Aorta (tissue), 5 donors: ENCODE measurements at regions of chr11 and their contacts with region 1.

Region 1: GRCh38 chr11:110429731-110430266 is at the start of gene FDX1:
- DNase-seq: peak; percentile 89 to 93
- ATAC-seq: peak; percentile 90
- H3K4me3 ChIP-seq: peak within 1 kb of the TSS; percentile 81 to 88
- H3K27ac ChIP-seq: peak within 1 kb of the TSS; percentile 19 to 41
- H3K4me1 ChIP-seq: peaks cover 0 to 3% of the 10 kb centered on the region in 2 donors
- H3K27me3 ChIP-seq: no peaks in the 10 kb centered on the region
- total RNA-seq, gene FDX1: 8.0 to 8.9 TPM

Region 2: DNA sequence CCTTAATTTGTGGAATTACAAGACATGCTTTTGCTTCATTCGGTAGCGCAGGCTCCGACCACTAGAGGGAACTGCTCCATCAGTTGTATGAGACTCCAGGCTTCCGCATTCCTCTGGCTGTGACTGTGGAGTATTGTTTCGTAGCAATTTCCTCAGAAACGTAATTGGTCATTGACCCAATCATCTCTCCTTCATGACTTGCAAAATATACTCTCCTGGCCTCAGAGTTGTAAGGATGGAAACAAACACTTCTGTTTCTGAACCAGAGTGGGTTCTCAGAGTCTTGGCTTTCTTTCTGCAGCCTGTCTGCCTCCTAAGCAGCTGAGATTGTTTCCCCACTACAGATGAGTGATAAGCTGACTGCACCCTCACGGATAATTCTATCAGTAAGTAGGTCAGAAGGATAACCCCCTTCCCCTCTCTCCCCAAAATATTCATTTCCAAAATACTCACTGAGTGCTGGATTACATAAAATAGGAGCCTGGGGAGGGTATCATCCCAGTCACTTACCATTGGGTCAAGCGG is 483.4 kb before region 1 on chr11:
- intact Hi-C with region 1: loop called in 1 of 2 experiments (anchors 10 kb)
- DNase-seq: peak; percentile 90 to 92
- ATAC-seq: peak; percentile 97
- H3K4me3 ChIP-seq: peak overlapping the region; percentile 29 to 84
- H3K27ac ChIP-seq: peak overlapping the region; percentile 28 to 86
- H3K4me1 ChIP-seq: peaks cover 0 to 3% of the 10 kb centered on the region in 2 donors
- H3K27me3 ChIP-seq: no peaks in the 10 kb centered on the region

Region 3: GRCh38 chr11:110279881-110280280 is 149.9 kb before region 1 on chr11:
- intact Hi-C with region 1: no loop called
- DNase-seq: no peak
- ATAC-seq: no peak
- H3K4me3 ChIP-seq: no peak overlapping the region
- H3K27ac ChIP-seq: no peak overlapping the region
- H3K4me1 ChIP-seq: no peaks in the 10 kb centered on the region
- H3K27me3 ChIP-seq: no peaks in the 10 kb centered on the region

Region 4: GRCh38 chr11:110296226-110297075 is 133.3 kb before region 1 on chr11 and contains the start of gene RDX:
- intact Hi-C with region 1: loop called (anchors 2 to 10 kb)
- DNase-seq: peak; percentile 86 to 93
- ATAC-seq: peak; percentile 88
- H3K4me3 ChIP-seq: peak within 1 kb of the TSS; percentile 74 to 96
- H3K27ac ChIP-seq: peak within 1 kb of the TSS; percentile 87 to 94
- H3K4me1 ChIP-seq: no peaks in the 10 kb centered on the region
- H3K27me3 ChIP-seq: no peaks in the 10 kb centered on the region
- total RNA-seq, gene RDX: 110 to 144 TPM

Region 5: DNA sequence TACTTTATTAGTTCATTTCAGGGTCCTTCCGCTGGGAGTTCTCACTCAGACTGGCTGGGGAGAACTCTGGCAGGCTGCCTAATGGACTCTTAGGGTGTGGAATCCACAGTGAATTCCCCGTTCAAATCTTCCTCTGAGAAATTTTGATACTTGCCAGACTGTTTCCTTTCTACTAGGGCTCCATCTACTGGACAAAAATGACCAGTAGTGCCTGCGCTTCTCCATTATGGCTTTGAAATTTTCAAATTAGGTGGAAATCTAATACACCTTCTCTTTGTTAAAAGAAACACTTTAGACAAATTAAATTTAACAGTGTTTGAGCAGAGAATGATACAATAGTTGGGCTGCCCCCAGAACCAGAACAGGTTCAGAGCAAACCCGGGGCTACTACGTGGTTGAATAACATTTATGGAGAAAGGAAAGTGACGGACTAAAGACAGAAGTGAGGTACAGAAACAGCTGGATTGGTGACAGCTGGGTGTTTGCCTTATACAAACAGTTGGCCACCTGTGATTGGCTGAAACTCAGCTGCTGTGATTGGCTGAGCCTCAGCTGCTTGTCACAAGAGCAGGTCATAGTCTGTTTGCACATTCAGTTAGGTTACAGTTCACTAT is 53.0 kb before region 1 on chr11:
- intact Hi-C with region 1: loop called in 1 of 2 experiments (anchors 5 kb)
- DNase-seq: peak in 1 of 2 donors; percentile 75
- ATAC-seq: peak; percentile 82
- H3K4me3 ChIP-seq: no peak overlapping the region
- H3K27ac ChIP-seq: peak overlapping the region in 1 of 2 donors; percentile 26
- H3K4me1 ChIP-seq: no peaks in the 10 kb centered on the region
- H3K27me3 ChIP-seq: no peaks in the 10 kb centered on the region

Region 6: GRCh38 chr11:110392056-110392455 is 37.7 kb before region 1 on chr11:
- intact Hi-C with region 1: no loop called
- DNase-seq: no peak
- ATAC-seq: no peak
- H3K4me3 ChIP-seq: no peak overlapping the region
- H3K27ac ChIP-seq: no peak overlapping the region
- H3K4me1 ChIP-seq: no peaks in the 10 kb centered on the region
- H3K27me3 ChIP-seq: no peaks in the 10 kb centered on the region

Region 7: DNA sequence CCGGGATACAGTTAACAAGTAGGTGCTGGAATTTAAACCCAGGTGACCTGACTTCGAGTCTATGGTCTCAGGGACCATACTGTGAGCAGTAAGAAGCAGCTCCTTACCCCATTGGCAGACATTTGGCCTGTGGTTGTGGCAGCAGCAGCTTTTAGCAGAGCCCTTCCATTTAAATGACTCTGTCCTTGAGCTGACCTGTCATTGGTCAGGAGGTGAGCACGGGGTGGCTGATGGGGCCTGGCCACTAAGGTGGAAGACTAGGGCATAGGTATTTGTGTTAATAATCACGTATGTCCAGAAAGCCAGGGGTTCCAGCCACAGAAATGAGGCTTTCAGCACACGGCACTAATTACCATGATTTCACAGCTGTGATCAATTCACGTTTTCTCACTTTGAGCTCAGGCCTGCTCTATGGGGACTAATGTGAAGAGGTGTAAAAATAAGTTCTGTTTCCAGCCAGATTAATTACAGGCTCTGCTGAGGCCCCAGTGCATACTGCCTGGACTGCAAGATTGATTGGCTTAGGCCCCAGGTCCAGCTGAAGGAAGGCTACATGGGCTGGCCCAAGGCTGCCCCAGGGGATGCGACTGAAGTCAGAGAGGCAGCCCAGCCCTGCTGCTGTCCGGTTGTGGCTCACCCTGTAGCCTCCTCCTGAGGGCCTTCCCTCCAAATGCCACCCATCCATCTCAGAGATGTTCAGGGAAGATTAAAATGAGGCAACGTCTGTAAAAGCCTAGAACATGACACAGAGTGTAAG is 75.9 kb after region 1 on chr11:
- intact Hi-C with region 1: no loop called
- DNase-seq: no peak
- ATAC-seq: no peak
- H3K4me3 ChIP-seq: no peak overlapping the region
- H3K27ac ChIP-seq: no peak overlapping the region
- H3K4me1 ChIP-seq: no peaks in the 10 kb centered on the region
- H3K27me3 ChIP-seq: no peaks in the 10 kb centered on the region

Region 8: DNA sequence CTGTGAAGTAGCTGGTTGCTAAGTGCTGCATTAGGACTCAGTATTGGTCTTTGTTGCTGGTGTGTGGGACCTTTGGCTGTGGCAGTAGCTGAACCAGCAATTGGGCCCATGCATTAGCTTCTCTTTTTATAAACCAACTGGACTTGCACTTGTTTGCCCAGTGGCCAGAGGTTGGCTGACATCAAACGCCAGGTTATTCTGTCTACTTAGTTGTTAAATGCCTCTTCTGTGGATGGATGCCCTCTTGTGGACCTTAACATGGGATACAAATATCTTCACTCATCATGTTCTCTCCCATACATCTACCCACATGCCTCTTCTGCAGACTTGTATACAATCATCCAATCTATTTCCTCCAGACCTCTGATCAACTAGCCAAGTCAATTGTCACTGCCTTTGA is 308.8 kb after region 1 on chr11:
- intact Hi-C with region 1: no loop called
- DNase-seq: no peak
- ATAC-seq: no peak
- H3K4me3 ChIP-seq: no peak overlapping the region
- H3K27ac ChIP-seq: no peak overlapping the region
- H3K4me1 ChIP-seq: no peaks in the 10 kb centered on the region
- H3K27me3 ChIP-seq: no peaks in the 10 kb centered on the region